Common myeloid progenitor, CD34-positive (primary cell): ENCODE measurements at regions of chr1 and their contacts with region 1.

Region 1: GRCh38 chr1:160291248-160292220 is 6.6 kb upstream of the PEX19 start:
- DNase-seq: peak; percentile 71 to 90 (median 86)
- H3K4me3 ChIP-seq: no peak overlapping the region
- H3K27ac ChIP-seq: no peak overlapping the region
- H3K4me1 ChIP-seq: no peaks in the 10 kb centered on the region
- H3K27me3 ChIP-seq: no peaks in the 10 kb centered on the region

Region 2: DNA sequence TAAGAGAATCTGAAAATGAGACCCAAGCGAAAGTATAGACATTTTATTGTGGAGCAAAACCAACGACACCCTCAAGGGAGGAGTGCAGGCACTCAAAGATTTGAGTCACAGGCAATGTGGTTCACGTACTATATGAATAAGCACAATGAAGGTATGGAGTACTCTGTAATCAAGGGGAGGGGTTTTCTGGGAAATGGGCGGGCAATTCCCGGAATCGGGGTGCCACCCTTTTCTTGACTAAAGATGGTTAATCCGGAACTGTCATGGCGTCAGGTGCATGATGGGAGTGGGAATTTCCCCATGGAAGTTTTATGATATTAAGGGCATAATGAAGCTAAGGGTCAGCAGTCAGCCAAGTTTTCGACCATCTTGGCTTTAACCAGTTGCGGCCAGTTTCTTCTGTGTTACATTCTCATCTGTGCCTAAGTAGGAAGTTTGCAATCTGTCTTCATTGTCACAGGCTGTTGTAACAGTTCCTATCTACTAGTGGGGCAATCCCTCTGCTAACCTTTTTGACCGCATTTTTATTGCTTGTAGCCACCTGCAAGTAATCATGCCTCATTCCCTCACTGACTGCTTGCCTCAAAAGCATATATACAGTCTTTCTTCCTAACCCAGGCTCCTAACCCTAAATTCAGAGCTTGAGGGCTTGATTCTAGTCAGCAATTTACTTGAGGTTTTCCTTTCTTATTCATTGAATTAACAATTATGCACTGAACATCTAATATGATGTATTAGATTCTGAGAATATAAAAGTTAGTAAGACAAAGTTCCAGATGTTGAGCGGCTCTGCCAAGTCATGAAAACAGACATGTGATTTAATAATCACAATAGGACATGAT is 1214.2 kb before region 1 on chr1:
- CTCF ChIA-PET with region 1: no interaction called
- POLR2A ChIA-PET with region 1: no interaction called
- DNase-seq: no peak
- H3K4me3 ChIP-seq: peak overlapping the region in 1 of 7 experiments; percentile 34
- H3K27ac ChIP-seq: no peak overlapping the region
- H3K4me1 ChIP-seq: no peaks in the 10 kb centered on the region
- H3K27me3 ChIP-seq: no peaks in the 10 kb centered on the region

Region 3: DNA sequence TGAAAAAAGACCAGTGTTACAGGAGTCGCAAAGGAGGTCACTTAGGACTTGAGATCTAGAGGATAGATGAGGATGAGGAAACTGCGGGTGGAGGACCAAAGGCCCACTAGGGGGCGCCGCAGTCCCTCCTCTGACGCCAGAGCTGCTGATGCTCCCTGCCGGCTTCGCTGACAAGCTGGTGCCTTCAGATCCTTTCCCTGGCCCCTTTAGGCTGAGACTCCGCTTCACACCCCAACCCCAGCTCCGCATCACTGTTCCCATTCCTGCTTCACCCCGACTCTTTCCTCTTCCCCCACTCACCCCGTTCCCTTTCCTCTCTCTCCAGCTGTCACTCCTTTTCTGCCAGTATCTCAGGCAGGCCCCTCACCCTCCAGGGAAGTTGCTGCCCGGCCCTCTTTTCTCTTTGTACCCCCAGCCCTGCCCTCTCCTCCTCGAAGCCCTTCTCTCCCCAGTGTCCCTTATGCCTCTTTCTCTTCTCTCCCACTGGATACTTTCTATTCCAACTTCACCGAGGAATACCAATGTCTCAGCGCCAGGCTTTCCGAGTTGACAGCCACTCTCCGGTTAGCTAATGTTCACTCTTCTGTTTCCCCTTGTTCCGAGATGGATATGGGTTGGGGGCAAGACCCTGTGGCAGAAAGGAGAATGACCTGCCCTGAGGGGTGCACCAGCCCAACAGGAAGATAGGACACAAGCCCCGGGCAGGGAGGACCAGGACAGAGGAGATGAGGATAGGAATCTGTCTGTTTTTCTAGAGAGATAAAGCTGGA is 205.7 kb before region 1 on chr1:
- CTCF ChIA-PET with region 1: interaction called, 19 read pairs
- POLR2A ChIA-PET with region 1: no interaction called
- DNase-seq: peak; percentile 81 to 86 (median 81)
- H3K4me3 ChIP-seq: no peak overlapping the region
- H3K27ac ChIP-seq: no peak overlapping the region
- H3K4me1 ChIP-seq: peaks cover 0 to 9% (median 7%) of the 10 kb centered on the region in 4 experiments
- H3K27me3 ChIP-seq: peaks cover 1 to 36% (median 23%) of the 10 kb centered on the region in 5 experiments

Region 4: DNA sequence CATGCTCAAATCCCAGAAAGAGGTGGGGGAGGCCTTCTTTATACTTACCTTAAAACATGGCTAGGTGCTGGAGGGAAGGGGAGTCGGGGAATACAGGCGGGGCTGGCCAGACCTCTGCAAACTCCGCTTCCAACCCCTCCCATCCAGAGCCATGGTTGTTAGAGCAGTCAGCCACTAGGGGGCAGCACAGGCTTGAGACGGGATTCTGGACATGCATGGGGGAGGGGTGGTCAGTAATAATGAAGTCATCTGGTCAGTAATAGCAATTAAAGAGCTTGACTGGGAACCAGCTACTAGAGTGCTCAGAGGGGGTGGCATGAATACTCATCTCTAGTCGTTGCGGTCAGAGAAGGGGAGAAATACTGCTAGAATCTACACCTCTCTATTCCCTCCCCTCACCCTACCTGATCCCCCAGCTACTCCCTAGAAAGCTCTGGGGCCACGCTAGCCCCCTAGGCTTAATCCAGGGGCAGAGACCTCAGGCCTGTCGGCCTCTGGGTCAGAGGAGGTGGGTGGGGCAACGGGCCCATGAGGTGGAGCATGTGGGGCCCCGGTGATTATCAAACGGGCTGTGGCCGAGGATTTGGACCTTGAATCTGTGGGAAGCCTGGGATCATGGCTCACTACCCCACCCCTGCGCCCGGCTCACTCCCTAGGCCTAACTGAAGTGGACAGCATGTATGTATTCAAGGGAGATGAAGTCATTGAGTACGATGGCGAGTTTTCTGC is 98.3 kb before region 1 on chr1:
- CTCF ChIA-PET with region 1: interaction called, 33 read pairs
- POLR2A ChIA-PET with region 1: no interaction called
- DNase-seq: peak; percentile 67 to 80 (median 68)
- H3K4me3 ChIP-seq: no peak overlapping the region
- H3K27ac ChIP-seq: no peak overlapping the region
- H3K4me1 ChIP-seq: peaks cover 0 to 3% (median 0%) of the 10 kb centered on the region in 4 experiments
- H3K27me3 ChIP-seq: peaks cover 0 to 2% (median 0%) of the 10 kb centered on the region in 5 experiments

Region 5: GRCh38 chr1:160261893-160262794 is 29.4 kb before region 1 on chr1 and contains the start of gene DCAF8:
- CTCF ChIA-PET with region 1: interaction called, 59 read pairs
- POLR2A ChIA-PET with region 1: interaction called, 3 read pairs
- DNase-seq: peak; percentile 97 to 99 (median 99)
- H3K4me3 ChIP-seq: peak within 1 kb of the TSS; percentile 88 to 99 (median 97)
- H3K27ac ChIP-seq: peak within 1 kb of the TSS; percentile 99
- H3K4me1 ChIP-seq: peaks cover 8 to 34% (median 21%) of the 10 kb centered on the region in 4 experiments
- H3K27me3 ChIP-seq: no peaks in the 10 kb centered on the region

Region 6: DNA sequence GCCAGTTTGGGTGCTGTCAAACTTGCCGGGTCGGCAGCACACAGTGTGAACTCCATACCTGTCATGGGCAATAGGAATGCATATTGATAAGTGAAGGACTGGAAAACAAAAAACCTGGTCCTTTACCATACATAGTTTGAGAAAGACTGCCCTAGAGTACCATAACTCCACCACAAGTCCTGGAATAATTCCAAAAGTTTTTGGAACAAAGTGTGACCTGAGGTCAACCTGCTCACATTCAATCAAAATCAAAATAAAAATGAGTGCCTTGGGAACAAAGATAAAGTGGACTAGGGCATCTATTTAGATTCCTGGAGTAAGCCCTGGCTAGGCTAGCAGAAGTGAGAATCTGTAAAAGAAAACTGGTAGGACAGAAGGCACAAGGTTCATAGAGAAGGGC is 14.2 kb before region 1 on chr1:
- CTCF ChIA-PET with region 1: interaction called, 21 read pairs
- POLR2A ChIA-PET with region 1: no interaction called
- DNase-seq: no peak
- H3K4me3 ChIP-seq: no peak overlapping the region
- H3K27ac ChIP-seq: no peak overlapping the region
- H3K4me1 ChIP-seq: no peaks in the 10 kb centered on the region
- H3K27me3 ChIP-seq: no peaks in the 10 kb centered on the region

Region 7: DNA sequence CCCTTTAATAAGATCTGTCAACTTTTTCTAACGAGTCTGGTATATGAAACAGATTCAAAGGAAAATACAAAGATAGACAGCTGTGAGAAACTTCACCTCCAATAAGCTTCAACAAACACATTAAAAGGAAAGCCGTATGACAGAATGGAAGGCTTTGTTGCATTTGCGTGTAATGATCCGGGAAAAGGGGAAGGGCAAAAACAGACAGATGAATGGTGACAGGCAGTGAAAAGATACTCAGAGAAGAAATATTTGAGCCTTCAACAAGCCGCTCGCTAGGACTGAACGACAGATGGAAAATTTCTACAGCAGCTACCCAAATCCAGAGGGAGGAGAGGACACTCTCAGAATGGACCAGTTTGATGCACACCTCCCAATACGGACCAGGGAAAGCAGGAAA is 36.6 kb after region 1 on chr1:
- CTCF ChIA-PET with region 1: interaction called, 25 read pairs
- POLR2A ChIA-PET with region 1: no interaction called
- DNase-seq: no peak
- H3K4me3 ChIP-seq: no peak overlapping the region
- H3K27ac ChIP-seq: no peak overlapping the region
- H3K4me1 ChIP-seq: no peaks in the 10 kb centered on the region
- H3K27me3 ChIP-seq: no peaks in the 10 kb centered on the region